CD4-positive, alpha-beta memory T cell (primary cell): ENCODE measurements at regions of chr2 and their contacts with region 1.

Region 1: GRCh38 chr2:161954103-161954502 is 119.9 kb downstream of the DPP4 start:
- DNase-seq: peak; percentile 56 to 72 (median 65)
- H3K4me3 ChIP-seq: no peak overlapping the region
- H3K4me3 Mint-ChIP-seq: peak overlapping the region in 7 of 8 donors; percentile 23 to 78 (median 60)
- H3K27ac ChIP-seq: no peak overlapping the region
- H3K27ac Mint-ChIP-seq: peak overlapping the region; percentile 14 to 90 (median 59)
- H3K4me1 ChIP-seq: peaks cover 69% of the 10 kb centered on the region
- H3K4me1 Mint-ChIP-seq: peaks cover 48 to 61% (median 54%) of the 10 kb centered on the region in 4 donors
- H3K27me3 ChIP-seq: no peaks in the 10 kb centered on the region
- H3K27me3 Mint-ChIP-seq: no peaks in the 10 kb centered on the region

Region 2: GRCh38 chr2:161265874-161266273 is 688.2 kb before region 1 on chr2:
- CTCF ChIA-PET with region 1: no interaction called
- POLR2A ChIA-PET with region 1: no interaction called
- intact Hi-C with region 1: no loop called
- DNase-seq: no peak
- H3K4me3 ChIP-seq: no peak overlapping the region
- H3K4me3 Mint-ChIP-seq: no peak overlapping the region
- H3K27ac ChIP-seq: no peak overlapping the region
- H3K27ac Mint-ChIP-seq: no peak overlapping the region
- H3K4me1 ChIP-seq: no peaks in the 10 kb centered on the region
- H3K4me1 Mint-ChIP-seq: no peaks in the 10 kb centered on the region
- H3K27me3 ChIP-seq: no peaks in the 10 kb centered on the region
- H3K27me3 Mint-ChIP-seq: peaks cover 0 to 3% of the 10 kb centered on the region in 2 donors

Region 3: GRCh38 chr2:161414042-161415033 is 539.8 kb before region 1 on chr2:
- CTCF ChIA-PET with region 1: no interaction called
- POLR2A ChIA-PET with region 1: no interaction called
- intact Hi-C with region 1: loop called (anchors 10 kb)
- DNase-seq: no peak
- H3K4me3 ChIP-seq: peak overlapping the region in 1 of 2 donors; percentile 19
- H3K4me3 Mint-ChIP-seq: peak overlapping the region; percentile 70 to 91 (median 78)
- H3K27ac ChIP-seq: no peak overlapping the region
- H3K27ac Mint-ChIP-seq: peak overlapping the region in 1 of 7 donors; percentile 54
- H3K4me1 ChIP-seq: peaks cover 54% of the 10 kb centered on the region
- H3K4me1 Mint-ChIP-seq: peaks cover 39 to 52% (median 45%) of the 10 kb centered on the region in 4 donors
- H3K27me3 ChIP-seq: peaks cover 53% of the 10 kb centered on the region
- H3K27me3 Mint-ChIP-seq: peaks cover 43 to 44% of the 10 kb centered on the region in 2 donors

Region 4: GRCh38 chr2:161586517-161587167 is 367.5 kb before region 1 on chr2:
- CTCF ChIA-PET with region 1: interaction called, 84 read pairs
- POLR2A ChIA-PET with region 1: no interaction called
- intact Hi-C with region 1: no loop called
- DNase-seq: peak in 4 of 5 donors; percentile 23 to 33 (median 28)
- H3K4me3 ChIP-seq: no peak overlapping the region
- H3K4me3 Mint-ChIP-seq: no peak overlapping the region
- H3K27ac ChIP-seq: no peak overlapping the region
- H3K27ac Mint-ChIP-seq: no peak overlapping the region
- H3K4me1 ChIP-seq: no peaks in the 10 kb centered on the region
- H3K4me1 Mint-ChIP-seq: no peaks in the 10 kb centered on the region
- H3K27me3 ChIP-seq: no peaks in the 10 kb centered on the region
- H3K27me3 Mint-ChIP-seq: peaks cover 0 to 4% of the 10 kb centered on the region in 2 donors

Region 5: DNA sequence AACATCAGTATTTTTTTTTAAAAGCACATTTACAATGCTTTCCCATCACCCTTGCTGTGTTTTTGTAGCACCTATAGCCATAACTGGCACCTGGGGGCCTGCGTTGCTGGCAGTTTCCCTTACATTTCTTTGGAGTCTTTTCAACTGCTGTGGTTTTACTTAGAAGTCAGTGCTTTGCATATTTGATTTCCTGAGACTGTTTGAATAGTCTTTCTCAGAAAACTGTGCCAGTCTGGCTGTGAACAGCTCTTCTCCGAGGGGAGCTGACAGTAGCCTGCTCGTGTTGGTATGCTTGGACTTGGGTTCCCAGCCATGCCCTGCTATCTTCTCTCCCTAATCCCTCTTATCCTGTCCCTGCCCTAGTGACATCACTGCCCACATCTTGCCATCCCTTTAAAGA is 38.4 kb after region 1 on chr2:
- CTCF ChIA-PET with region 1: interaction called, 6 read pairs
- POLR2A ChIA-PET with region 1: interaction called, 23 read pairs
- intact Hi-C with region 1: loop called (anchors 2 kb)
- DNase-seq: peak; percentile 46 to 62 (median 57)
- H3K4me3 ChIP-seq: peak overlapping the region; percentile 20 to 36
- H3K4me3 Mint-ChIP-seq: peak overlapping the region; percentile 70 to 94 (median 84)
- H3K27ac ChIP-seq: peak overlapping the region; percentile 65
- H3K27ac Mint-ChIP-seq: peak overlapping the region; percentile 95 to 99 (median 98)
- H3K4me1 ChIP-seq: peaks cover 56% of the 10 kb centered on the region
- H3K4me1 Mint-ChIP-seq: peaks cover 41 to 72% (median 50%) of the 10 kb centered on the region in 4 donors
- H3K27me3 ChIP-seq: no peaks in the 10 kb centered on the region
- H3K27me3 Mint-ChIP-seq: no peaks in the 10 kb centered on the region

Region 6: DNA sequence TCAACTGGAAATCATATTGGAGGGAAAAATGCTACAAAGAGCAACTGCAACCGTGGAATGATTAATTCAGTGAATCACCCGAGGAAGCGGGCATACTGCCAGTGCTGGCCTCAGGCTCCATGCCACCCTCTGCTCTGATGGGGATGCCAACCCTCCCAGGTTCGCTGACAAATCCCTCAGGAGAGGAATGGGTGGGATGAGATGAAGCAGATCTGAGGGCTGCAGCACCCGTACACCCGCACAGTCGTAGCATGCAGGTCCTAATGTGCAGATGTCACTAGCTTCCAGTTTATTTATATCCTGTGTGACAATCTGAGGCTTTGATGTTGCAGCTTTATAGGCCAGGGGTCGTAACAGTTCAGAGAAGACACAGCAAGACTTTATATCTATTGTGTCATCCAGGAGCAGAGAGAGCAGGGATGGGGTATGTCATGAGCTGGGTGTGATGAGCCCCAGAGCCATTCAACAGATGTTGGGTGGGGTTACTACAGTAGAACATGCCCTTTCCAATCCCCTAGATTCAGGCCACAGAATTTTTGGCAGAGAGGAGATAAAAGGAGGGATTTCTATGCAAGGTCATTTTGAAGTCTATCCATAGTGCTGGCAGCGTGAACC is 75.3 kb after region 1 on chr2:
- CTCF ChIA-PET with region 1: no interaction called
- POLR2A ChIA-PET with region 1: no interaction called
- intact Hi-C with region 1: no loop called
- DNase-seq: no peak
- H3K4me3 ChIP-seq: no peak overlapping the region
- H3K4me3 Mint-ChIP-seq: no peak overlapping the region
- H3K27ac ChIP-seq: no peak overlapping the region
- H3K27ac Mint-ChIP-seq: peak overlapping the region in 4 of 7 donors; percentile 5 to 55 (median 34)
- H3K4me1 ChIP-seq: no peaks in the 10 kb centered on the region
- H3K4me1 Mint-ChIP-seq: peaks cover 6 to 15% (median 12%) of the 10 kb centered on the region in 4 donors
- H3K27me3 ChIP-seq: no peaks in the 10 kb centered on the region
- H3K27me3 Mint-ChIP-seq: no peaks in the 10 kb centered on the region

Region 7: DNA sequence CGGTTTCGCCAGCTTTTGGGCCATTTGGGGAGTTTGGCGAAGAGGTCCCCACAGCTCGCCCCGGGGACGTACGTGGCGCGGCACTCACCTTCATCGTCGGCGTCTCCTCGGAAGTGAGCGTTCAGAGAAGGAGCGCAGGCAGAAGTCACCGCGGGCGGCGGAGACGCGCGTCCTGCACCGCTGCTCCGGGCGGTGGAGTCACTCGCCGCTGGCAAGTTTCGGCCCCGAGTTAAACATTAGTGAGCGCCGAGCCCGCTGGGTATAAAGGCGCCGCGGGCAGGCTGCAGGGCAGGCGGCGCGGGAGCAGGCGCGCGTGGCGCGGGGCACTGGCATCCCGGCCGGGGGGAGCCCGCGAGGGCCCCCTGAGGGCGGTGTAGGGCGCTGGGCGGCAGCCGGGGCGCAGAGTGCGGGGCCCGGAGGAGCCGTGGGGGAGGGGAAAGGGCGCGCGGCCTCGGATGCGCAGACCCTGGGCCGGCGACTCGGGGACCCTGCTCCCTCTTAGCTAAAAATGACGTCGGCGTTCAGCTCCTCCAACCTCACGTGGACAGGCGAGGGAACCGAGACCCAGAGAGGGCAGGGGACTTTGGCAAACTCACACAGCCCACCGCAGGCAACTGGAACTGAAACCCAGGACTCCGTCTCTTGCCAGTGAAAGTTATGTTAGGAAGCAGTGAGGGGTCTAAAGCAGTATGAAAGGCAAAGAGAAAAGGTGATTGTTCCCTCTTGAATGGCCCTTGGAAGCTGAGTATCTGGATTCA is 120.0 kb after region 1 on chr2 and contains the start of gene DPP4:
- CTCF ChIA-PET with region 1: no interaction called
- POLR2A ChIA-PET with region 1: interaction called, 11 read pairs
- intact Hi-C with region 1: loop called (anchors 5 kb)
- DNase-seq: peak; percentile 52 to 64 (median 58)
- H3K4me3 ChIP-seq: peak within 1 kb of the TSS; percentile 68 to 76
- H3K4me3 Mint-ChIP-seq: peak within 1 kb of the TSS; percentile 95 to 100 (median 98)
- H3K27ac ChIP-seq: peak within 1 kb of the TSS; percentile 78
- H3K27ac Mint-ChIP-seq: peak within 1 kb of the TSS; percentile 86 to 98 (median 94)
- H3K4me1 ChIP-seq: peaks cover 45% of the 10 kb centered on the region
- H3K4me1 Mint-ChIP-seq: peaks cover 39 to 62% (median 48%) of the 10 kb centered on the region in 4 donors
- H3K27me3 ChIP-seq: no peaks in the 10 kb centered on the region
- H3K27me3 Mint-ChIP-seq: no peaks in the 10 kb centered on the region
- total RNA-seq, gene DPP4: 38.5 to 40.2 TPM

Region 8: GRCh38 chr2:162143969-162144368 is 189.9 kb after region 1 on chr2:
- CTCF ChIA-PET with region 1: no interaction called
- POLR2A ChIA-PET with region 1: no interaction called
- intact Hi-C with region 1: no loop called
- DNase-seq: no peak
- H3K4me3 ChIP-seq: no peak overlapping the region
- H3K4me3 Mint-ChIP-seq: no peak overlapping the region
- H3K27ac ChIP-seq: no peak overlapping the region
- H3K27ac Mint-ChIP-seq: no peak overlapping the region
- H3K4me1 ChIP-seq: no peaks in the 10 kb centered on the region
- H3K4me1 Mint-ChIP-seq: no peaks in the 10 kb centered on the region
- H3K27me3 ChIP-seq: peaks cover 4% of the 10 kb centered on the region
- H3K27me3 Mint-ChIP-seq: peaks cover 22 to 24% of the 10 kb centered on the region in 2 donors

Region 9: DNA sequence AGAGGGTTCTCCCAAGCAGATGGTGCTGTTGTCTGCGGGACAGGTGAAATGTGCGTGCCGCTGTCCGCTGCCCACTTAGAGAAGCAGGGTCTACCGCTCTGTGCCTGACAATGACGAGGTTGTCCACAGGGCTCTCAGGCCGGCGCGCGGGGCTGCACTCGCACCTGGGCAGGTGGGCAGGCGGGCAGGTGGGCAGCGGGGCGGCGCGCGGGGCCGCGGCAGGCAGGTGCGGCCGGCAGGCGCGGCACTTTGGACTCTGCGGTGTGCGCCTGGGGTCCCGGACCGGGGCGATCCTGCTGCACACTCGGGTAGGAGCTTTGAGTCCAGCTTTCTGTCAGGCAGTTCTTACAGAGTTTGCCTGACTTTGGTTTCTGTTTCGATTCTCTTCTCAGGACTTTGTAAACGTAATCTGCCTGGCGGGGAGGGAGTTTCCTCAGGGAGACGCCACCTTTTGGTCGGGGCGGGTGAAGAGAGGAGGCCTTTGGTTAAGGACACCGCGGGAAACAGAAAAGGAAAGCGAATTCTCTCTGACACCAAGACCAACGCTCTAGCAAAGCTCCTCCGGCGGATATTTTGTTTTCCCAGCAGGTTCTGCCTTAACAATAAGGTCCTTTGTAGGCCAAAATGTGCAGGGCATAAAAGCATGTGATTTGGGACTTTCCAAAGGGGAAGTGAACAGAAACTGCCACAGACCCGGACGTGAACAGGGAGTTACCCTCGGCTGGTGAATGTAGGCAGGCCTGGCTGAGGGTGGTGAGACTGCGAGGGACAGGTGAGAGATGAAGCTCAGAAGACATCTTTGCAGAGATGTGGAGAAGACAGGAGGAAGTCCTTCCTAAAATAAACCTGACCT is 364.5 kb after region 1 on chr2 and contains the start of gene IFIH1:
- CTCF ChIA-PET with region 1: no interaction called
- POLR2A ChIA-PET with region 1: interaction called, 6 read pairs
- intact Hi-C with region 1: loop called (anchors 10 kb)
- DNase-seq: peak; percentile 82 to 93 (median 83)
- H3K4me3 ChIP-seq: peak within 1 kb of the TSS; percentile 93 to 97
- H3K4me3 Mint-ChIP-seq: peak within 1 kb of the TSS; percentile 93 to 100 (median 98)
- H3K27ac ChIP-seq: peak within 1 kb of the TSS; percentile 97
- H3K27ac Mint-ChIP-seq: peak within 1 kb of the TSS; percentile 98 to 100 (median 99)
- H3K4me1 ChIP-seq: peaks cover 56% of the 10 kb centered on the region
- H3K4me1 Mint-ChIP-seq: peaks cover 48 to 65% (median 57%) of the 10 kb centered on the region in 4 donors
- H3K27me3 ChIP-seq: no peaks in the 10 kb centered on the region
- H3K27me3 Mint-ChIP-seq: no peaks in the 10 kb centered on the region
- total RNA-seq, gene IFIH1: 30.1 to 31.2 TPM